OCI-LY7 (cell line): ENCODE measurements at regions of chr5 and their contacts with region 1.

Region 1: GRCh38 chr5:177113566-177114424 is 19.8 kb upstream of the NSD1 start:
- DNase-seq: peak; percentile 83
- H3K4me3 ChIP-seq: no peak overlapping the region
- H3K27ac ChIP-seq: peak overlapping the region; percentile 11
- H3K4me1 ChIP-seq: peaks cover 53% of the 10 kb centered on the region
- CTCF ChIP-seq: peak; percentile 99

Region 2: DNA sequence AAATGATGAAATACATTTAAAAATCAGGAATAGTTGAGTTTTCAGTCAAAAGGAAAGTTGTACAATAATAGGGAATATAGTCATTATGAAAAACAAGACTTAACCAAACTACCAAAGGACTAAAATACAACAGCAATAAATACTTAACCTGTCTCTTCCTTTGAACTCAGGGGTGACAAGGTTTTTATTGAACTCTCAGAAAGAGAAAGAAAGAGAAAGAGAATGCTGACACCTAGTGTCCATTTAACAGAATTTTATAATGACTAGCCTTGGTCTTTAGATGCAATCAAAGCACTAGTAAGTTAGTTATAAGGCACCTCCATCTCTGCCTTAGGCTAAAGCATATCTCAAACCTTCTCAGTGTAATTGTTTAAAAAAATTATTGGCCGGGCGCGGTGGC is 154.7 kb before region 1 on chr5:
- CTCF ChIA-PET with region 1: no interaction called
- POLR2A ChIA-PET with region 1: no interaction called
- intact Hi-C with region 1: loop called (anchors 5 kb)
- DNase-seq: peak; percentile 63
- H3K4me3 ChIP-seq: no peak overlapping the region
- H3K27ac ChIP-seq: no peak overlapping the region
- H3K4me1 ChIP-seq: no peaks in the 10 kb centered on the region
- CTCF ChIP-seq: peak; percentile 80

Region 3: DNA sequence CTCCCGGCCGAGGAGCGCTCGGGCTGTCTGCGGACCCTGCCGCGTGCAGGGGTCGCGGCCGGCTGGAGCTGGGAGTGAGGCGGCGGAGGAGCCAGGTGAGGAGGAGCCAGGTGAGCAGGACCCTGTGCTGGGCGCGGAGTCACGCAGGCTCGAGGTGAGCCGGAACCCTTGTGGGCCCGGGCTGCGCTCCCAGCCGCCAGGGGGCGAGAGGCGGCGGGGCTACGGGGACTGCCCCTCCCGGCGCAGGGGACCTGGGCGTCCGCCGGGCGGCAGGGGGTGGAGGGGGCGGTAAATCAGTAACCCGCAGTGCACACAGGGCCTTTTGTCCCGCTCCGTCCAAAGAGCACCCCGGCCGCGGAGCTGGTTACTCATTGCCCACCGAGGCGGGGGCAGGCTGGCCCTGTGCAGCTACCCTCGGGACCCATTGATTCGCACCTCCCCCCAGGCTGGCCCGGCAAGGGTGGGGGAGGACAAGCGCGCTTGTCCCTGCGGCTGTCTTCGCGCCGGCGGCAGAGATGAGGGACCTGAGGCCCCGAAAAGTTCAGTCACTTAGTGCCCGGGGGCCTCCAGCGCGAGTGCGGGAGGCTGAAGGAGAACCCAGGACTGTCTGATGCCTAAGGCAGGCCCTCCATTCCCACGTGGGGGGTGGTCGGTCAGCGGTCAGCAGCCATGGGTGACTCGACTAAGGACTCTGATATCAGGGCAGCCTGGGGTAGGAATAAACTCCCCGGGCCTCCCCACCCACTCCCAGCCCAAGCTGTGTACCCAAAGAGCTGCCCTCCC is 26.7 kb before region 1 on chr5:
- CTCF ChIA-PET with region 1: interaction called, 13 read pairs
- POLR2A ChIA-PET with region 1: interaction called, 4 read pairs
- intact Hi-C with region 1: no loop called
- DNase-seq: peak; percentile 69
- H3K4me3 ChIP-seq: peak overlapping the region; percentile 66
- H3K27ac ChIP-seq: no peak overlapping the region
- H3K4me1 ChIP-seq: peaks cover 27% of the 10 kb centered on the region
- CTCF ChIP-seq: peak; percentile 80

Region 4: DNA sequence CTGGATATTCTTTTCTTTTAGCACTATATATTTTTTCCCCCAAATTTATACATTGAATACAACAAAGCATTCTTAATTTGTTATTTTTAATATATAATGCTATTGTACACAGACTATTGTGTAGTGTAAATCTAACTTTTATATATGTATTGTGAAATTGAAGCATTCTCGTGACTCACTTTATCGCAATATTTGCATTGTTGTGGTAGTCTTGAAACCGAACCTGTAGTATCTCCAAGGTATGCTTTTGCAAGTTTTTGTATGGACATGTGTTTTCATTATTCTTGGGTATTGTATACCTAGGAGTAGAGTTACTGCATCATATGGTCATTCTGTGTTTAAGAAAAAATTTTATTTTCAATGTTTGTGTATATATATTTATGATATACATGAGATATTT is 69.3 kb after region 1 on chr5:
- CTCF ChIA-PET with region 1: no interaction called
- POLR2A ChIA-PET with region 1: no interaction called
- intact Hi-C with region 1: no loop called
- DNase-seq: no peak
- H3K4me3 ChIP-seq: no peak overlapping the region
- H3K27ac ChIP-seq: no peak overlapping the region
- H3K4me1 ChIP-seq: peaks cover 10% of the 10 kb centered on the region
- CTCF ChIP-seq: no peak

Region 5: DNA sequence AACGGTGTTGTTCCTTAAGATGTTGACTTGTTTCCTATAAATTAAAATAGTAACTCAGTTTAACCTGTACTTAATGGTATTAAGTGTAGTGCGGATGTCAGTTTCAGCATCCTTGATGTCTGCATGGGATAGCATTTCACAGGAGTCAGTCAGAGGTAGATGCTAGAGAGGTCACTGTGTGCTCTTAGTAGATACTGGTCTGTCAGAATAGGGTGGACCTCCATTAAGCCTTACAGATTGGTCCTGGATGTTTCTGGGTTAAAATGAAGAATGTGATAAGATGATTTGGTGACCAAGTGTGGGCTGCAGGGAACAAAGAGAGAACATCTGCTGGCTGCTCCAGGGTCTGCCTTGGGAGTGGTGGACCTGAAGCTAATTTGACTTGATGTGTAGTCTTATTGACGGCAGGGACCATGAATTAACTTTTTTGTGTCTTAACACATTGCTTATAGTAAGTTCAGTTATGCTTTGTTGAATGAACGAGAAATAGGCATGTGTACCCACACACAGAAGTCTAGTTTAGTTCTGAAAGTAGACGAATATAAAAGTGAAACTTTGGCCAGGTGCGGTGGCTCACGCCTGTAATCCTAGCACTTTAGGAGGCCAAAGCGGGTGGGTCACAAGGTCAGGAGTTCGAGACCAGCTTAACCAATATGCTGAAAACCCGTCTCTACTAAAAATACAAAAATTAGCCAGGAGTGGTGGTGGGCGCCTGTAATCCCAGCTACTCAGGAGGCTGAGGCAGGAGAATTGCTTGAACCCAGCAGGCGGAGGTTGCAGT is 177.2 kb after region 1 on chr5:
- CTCF ChIA-PET with region 1: no interaction called
- POLR2A ChIA-PET with region 1: no interaction called
- intact Hi-C with region 1: loop called (anchors 1 kb)
- DNase-seq: peak; percentile 85
- H3K4me3 ChIP-seq: peak overlapping the region; percentile 37
- H3K27ac ChIP-seq: peak overlapping the region; percentile 93
- H3K4me1 ChIP-seq: peaks cover 29% of the 10 kb centered on the region
- CTCF ChIP-seq: no peak

Region 6: DNA sequence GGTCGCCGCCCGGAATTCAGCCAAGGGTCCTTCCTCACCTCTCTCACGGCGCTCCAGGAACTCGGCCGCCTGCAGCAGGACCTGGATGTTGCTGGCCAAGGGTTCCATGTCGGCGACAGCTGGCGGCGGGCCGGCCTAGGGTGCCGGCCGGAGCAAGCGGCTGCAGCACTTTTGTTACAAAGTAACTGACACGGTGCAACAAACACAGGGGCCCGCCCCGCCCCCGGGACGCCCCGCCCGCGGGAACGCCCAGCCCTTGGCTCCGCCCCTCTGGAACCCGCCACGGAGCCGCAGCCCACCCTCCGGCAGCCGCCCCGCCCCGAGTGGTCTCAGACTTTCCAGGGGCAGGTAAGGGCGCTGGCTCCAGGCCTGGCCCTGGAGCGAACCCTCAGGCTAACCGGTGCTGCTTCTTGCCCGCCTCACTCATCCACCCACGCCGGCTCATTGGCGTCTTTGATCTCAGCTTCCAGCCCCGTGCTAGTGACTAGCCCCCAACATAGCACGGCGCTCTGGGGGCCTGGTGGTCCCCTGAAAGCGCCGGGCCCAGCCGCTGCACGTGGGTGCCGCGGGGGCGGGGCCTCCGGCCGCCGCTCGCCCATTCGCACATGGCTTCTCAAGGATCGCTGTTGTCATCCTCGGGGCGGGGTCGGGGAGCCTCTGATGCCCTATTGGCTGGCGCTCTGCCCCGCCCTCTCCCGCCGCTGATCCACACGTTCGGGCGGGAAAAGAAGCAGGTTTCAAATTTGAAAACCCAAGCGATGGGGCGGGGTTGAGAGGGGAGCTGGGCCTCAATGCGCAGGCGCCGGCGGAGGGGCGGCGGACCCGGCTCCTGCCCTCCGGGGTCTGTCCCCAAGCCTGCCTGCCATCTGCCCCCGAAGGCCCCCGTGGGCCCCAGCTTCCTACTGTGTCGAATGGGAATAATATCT is 198.2 kb after region 1 on chr5 and contains the start of gene MXD3:
- CTCF ChIA-PET with region 1: interaction called, 5 read pairs
- POLR2A ChIA-PET with region 1: interaction called, 5 read pairs
- intact Hi-C with region 1: loop called (anchors 1 kb)
- DNase-seq: peak; percentile 99
- H3K4me3 ChIP-seq: peak within 1 kb of the TSS; percentile 94
- H3K27ac ChIP-seq: peak within 1 kb of the TSS; percentile 92
- H3K4me1 ChIP-seq: peaks cover 51% of the 10 kb centered on the region
- CTCF ChIP-seq: no peak
- total RNA-seq, gene MXD3: 109 and 130 TPM in 2 replicates

Region 7: DNA sequence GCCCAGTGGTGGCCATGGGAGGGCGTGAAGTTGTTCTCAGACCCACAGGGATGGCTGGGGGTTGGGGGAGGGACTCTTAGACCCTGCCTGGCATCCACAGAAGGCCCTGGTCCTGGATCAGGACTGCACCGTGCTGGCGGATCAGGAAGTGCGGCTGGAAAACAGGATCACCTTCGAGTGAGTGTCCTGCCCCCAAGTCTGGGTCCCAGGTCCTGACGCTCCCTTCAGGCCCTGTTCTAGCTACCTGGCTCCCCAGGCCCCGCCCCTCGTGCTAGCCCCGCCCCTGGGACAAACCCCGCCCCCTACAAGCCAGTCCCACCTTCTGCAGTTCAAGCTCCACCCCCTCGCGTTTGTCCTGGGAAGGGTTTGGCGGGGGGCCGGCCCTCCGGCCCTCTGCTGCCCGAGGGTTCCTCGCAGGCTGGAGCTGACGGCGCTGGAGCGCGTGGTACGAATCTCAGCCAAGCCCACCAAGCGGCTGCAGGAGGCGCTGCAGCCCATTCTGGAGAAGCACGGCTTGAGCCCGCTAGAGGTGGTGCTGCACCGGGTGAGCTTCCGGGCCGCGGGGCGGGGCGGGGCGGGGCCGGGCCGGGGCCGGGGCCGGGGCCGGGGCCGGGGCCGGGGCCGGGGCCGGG is 256.8 kb after region 1 on chr5:
- CTCF ChIA-PET with region 1: no interaction called
- POLR2A ChIA-PET with region 1: no interaction called
- intact Hi-C with region 1: no loop called
- DNase-seq: peak; percentile 87
- H3K4me3 ChIP-seq: peak overlapping the region; percentile 10
- H3K27ac ChIP-seq: peak overlapping the region; percentile 56
- H3K4me1 ChIP-seq: peaks cover 42% of the 10 kb centered on the region
- CTCF ChIP-seq: peak; percentile 63